Activated naive CD4-positive, alpha-beta T cell treated with anti-CD3 and anti-CD28 coated beads for 36 hours (primary cell): ENCODE measurements at regions of chr7 and their contacts with region 1.

Region 1: DNA sequence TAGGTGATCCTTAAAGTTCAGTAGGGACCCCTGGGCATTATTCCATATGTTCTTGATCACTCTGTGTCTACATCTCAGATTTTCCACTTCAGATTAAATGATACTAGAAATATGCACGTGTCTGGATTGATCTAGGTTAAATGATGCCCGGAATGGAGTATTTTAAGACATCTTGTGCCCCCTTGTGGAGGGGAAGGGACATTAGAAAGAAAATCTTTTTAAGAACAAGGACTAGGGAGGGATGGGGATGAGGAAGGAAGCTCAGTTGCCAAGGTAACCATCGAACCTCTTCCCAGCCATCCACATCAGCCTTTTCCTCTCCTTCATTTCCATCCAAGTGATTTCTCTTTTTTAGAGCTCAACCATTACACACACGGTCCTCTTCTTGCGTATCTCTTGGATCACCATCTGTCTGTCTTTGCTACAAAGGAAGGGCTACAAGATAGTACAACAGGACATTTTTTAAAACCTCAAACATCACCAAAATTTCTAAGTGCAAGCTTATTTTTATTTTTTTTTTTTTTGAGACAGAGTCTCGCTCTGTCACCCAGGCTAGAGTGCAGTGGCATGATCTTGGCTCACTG is 40.5 kb downstream of the PRSS2 start:
- DNase-seq: peak; percentile 61
- H3K4me3 Mint-ChIP-seq: peak overlapping the region; percentile 42
- H3K27ac Mint-ChIP-seq: peak overlapping the region; percentile 99
- H3K4me1 Mint-ChIP-seq: peaks cover 83% of the 10 kb centered on the region
- H3K27me3 Mint-ChIP-seq: no peaks in the 10 kb centered on the region

Region 2: DNA sequence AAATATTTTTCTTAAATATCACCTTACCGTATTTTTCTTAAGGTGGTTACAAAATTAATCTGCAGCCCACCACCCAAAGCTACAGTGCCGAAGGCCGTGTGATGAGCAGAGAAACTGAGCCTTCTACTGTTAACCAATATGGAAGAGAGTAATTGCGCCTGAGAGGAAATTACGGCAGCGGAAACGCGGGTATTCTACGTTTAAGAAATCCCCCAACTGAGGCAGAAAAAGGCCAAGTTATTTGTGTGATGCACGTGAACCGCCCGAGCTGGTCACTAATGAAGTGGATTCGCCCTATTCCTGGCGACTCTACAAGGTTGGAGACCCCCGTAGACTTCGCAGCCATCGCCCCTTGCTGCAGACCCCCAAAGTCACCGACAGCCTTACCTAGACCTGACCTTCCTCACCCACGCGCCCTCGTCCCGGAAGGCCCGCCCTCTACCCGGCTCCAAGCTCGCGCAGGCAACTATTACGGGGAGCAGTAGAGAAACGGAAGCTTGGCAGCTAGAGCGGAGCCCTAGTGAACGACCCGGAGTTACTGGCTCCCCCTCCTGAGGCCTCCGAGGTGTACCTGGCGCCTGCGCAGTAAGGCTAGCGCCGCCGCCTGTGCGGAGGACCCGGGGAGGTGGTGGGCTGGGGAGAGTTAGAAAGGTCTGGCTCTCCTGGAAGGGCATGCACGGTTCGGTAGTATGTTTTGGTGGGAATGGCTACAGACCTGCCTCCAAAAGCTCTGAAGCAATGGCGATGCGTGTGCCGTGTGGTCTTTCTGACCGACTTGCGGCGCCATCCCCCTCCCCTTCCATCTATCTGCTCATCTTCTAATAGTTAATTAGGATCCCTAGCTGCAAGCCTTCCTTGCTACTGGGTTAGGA is 1796.5 kb before region 1 on chr7 and contains the start of gene MRPS33:
- CTCF ChIA-PET with region 1: no interaction called
- intact Hi-C with region 1: loop called (anchors 5 kb)
- DNase-seq: peak; percentile 97
- H3K4me3 Mint-ChIP-seq: peak within 1 kb of the TSS; percentile 95
- H3K27ac Mint-ChIP-seq: peak within 1 kb of the TSS; percentile 98
- H3K4me1 Mint-ChIP-seq: peaks cover 28% of the 10 kb centered on the region
- H3K27me3 Mint-ChIP-seq: peaks cover 3% of the 10 kb centered on the region
- total RNA-seq, gene MRPS33: 116 to 120 TPM

Region 3: GRCh38 chr7:142307261-142307900 is 503.9 kb before region 1 on chr7:
- CTCF ChIA-PET with region 1: interaction called, 21 read pairs
- intact Hi-C with region 1: loop called (anchors 1 kb)
- DNase-seq: no peak
- H3K4me3 Mint-ChIP-seq: no peak overlapping the region
- H3K27ac Mint-ChIP-seq: peak overlapping the region; percentile 59
- H3K4me1 Mint-ChIP-seq: peaks cover 12% of the 10 kb centered on the region
- H3K27me3 Mint-ChIP-seq: peaks cover 3% of the 10 kb centered on the region

Region 4: DNA sequence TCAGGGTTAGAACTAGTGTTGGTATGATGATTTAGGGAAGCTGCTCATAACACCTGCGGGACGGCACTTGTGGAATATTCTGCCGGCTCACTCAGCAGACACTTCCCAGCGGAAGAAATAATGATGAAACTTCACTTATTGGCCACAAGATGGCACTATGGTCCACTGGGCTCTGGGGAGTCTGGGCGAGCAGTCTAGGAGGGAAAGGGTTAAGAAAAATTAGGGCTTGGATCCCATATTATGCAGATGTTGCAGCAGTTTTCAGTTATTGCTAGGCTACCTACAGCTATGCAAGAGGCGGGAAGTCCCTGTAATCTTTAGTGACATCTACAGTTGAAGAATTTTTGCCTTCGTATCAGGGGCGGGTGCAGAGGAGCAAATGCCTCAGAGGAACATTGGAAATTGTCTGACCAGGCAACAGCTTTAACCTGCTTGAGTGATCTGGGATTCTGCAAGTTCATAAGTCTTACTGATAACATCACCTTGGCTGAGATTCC is 314.7 kb before region 1 on chr7:
- CTCF ChIA-PET with region 1: interaction called, 6 read pairs
- intact Hi-C with region 1: loop called (anchors 1 kb)
- DNase-seq: peak; percentile 40
- H3K4me3 Mint-ChIP-seq: peak overlapping the region; percentile 29
- H3K27ac Mint-ChIP-seq: peak overlapping the region; percentile 52
- H3K4me1 Mint-ChIP-seq: peaks cover 70% of the 10 kb centered on the region
- H3K27me3 Mint-ChIP-seq: no peaks in the 10 kb centered on the region

Region 5: GRCh38 chr7:142632291-142633134 is 178.7 kb before region 1 on chr7:
- CTCF ChIA-PET with region 1: interaction called, 25 read pairs
- intact Hi-C with region 1: loop called (anchors 1 kb)
- DNase-seq: peak; percentile 66
- H3K4me3 Mint-ChIP-seq: no peak overlapping the region
- H3K27ac Mint-ChIP-seq: no peak overlapping the region
- H3K4me1 Mint-ChIP-seq: peaks cover 11% of the 10 kb centered on the region
- H3K27me3 Mint-ChIP-seq: no peaks in the 10 kb centered on the region

Region 6: GRCh38 chr7:142838461-142839213 is 27.4 kb after region 1 on chr7:
- CTCF ChIA-PET with region 1: interaction called, 32 read pairs
- intact Hi-C with region 1: loop called (anchors 1 kb)
- DNase-seq: no peak
- H3K4me3 Mint-ChIP-seq: no peak overlapping the region
- H3K27ac Mint-ChIP-seq: no peak overlapping the region
- H3K4me1 Mint-ChIP-seq: peaks cover 22% of the 10 kb centered on the region
- H3K27me3 Mint-ChIP-seq: no peaks in the 10 kb centered on the region

Region 7: GRCh38 chr7:143240291-143241168 is 429.3 kb after region 1 on chr7:
- CTCF ChIA-PET with region 1: no interaction called
- intact Hi-C with region 1: loop called (anchors 1 kb)
- DNase-seq: peak; percentile 85
- H3K4me3 Mint-ChIP-seq: no peak overlapping the region
- H3K27ac Mint-ChIP-seq: no peak overlapping the region
- H3K4me1 Mint-ChIP-seq: peaks cover 22% of the 10 kb centered on the region
- H3K27me3 Mint-ChIP-seq: peaks cover 1% of the 10 kb centered on the region

Region 8: GRCh38 chr7:143391462-143392404 is 580.5 kb after region 1 on chr7:
- CTCF ChIA-PET with region 1: no interaction called
- intact Hi-C with region 1: no loop called
- DNase-seq: no peak
- H3K4me3 Mint-ChIP-seq: no peak overlapping the region
- H3K27ac Mint-ChIP-seq: no peak overlapping the region
- H3K4me1 Mint-ChIP-seq: peaks cover 13% of the 10 kb centered on the region
- H3K27me3 Mint-ChIP-seq: no peaks in the 10 kb centered on the region

Region 9: DNA sequence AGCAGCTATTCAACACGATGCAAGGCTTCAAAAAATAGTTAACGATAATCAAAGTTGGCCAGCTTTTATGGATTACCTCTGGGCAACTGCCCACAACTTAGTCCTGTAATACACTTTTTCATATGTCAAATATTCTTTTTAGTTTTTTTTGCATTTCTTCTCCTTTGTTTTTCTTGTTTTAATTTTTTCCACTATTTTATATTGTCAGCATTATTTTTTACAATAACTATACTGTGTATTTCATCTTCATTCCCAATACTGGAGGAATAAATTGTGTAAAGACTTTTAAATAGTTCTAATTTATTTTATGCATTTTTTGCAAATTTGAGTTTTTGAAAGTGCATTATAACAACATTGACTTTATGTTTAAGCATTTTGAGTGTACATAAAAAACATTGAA is 1353.5 kb after region 1 on chr7:
- CTCF ChIA-PET with region 1: no interaction called
- intact Hi-C with region 1: no loop called
- DNase-seq: no peak
- H3K4me3 Mint-ChIP-seq: no peak overlapping the region
- H3K27ac Mint-ChIP-seq: no peak overlapping the region
- H3K4me1 Mint-ChIP-seq: no peaks in the 10 kb centered on the region
- H3K27me3 Mint-ChIP-seq: peaks cover 6% of the 10 kb centered on the region